ENCODE measurements at regions of chr12 and their contacts with region 1.

Region 1: DNA sequence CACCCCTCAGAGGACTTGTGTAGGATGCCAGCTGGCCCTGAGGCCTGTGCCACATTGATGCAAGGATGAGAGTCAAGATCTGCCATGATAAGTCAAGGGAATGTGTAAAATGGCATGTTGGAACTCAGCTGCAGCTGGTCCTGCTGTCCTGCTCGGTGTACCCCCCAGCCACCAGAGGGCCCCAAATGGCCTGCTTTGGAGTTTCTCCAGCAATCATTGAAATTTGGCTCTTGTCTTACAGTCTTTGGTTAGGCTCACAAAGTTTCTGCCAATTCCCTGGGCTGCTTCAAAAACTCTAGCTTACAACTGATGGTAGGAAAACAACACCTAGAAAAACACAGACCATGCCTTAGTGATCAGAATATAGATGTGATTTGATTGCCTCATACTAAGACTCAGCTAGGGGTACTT is 76.8 kb downstream of the HSD17B6 start:
- DNase-seq: peak; percentile 53
- H3K4me3 ChIP-seq: no peak overlapping the region
- H3K27ac ChIP-seq: no peak overlapping the region
- H3K4me1 ChIP-seq: no peaks in the 10 kb centered on the region
- H3K27me3 ChIP-seq: no peaks in the 10 kb centered on the region
- CTCF ChIP-seq: peak; percentile 27

Region 2: DNA sequence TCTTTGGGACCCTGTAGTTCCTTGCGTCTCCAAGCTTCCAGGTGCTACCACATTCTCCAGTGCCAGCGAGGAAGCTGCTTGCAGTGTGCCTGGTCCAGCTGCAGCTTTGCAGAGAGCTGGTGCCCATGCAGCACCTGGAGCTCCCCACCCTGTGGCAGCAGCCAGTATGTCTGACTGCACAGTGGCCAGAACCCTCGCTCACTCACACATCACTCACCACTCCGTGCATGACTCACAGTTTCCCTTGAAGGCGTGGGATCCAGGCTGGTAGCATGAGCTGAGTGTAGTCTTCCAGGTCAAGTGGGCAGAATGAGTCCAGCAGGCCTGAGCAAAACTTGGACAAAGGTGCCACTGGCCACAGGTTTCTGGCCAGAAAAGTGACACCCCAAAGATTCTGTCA is 60.7 kb after region 1 on chr12:
- intact Hi-C with region 1: no loop called
- DNase-seq: no peak
- H3K4me3 ChIP-seq: no peak overlapping the region
- H3K27ac ChIP-seq: no peak overlapping the region
- H3K4me1 ChIP-seq: no peaks in the 10 kb centered on the region
- H3K27me3 ChIP-seq: no peaks in the 10 kb centered on the region
- CTCF ChIP-seq: no peak

Region 3: GRCh38 chr12:56987551-56988053 is 147.7 kb after region 1 on chr12:
- intact Hi-C with region 1: loop called (anchors 2 kb)
- DNase-seq: peak; percentile 82
- H3K4me3 ChIP-seq: no peak overlapping the region
- H3K27ac ChIP-seq: no peak overlapping the region
- H3K4me1 ChIP-seq: no peaks in the 10 kb centered on the region
- H3K27me3 ChIP-seq: no peaks in the 10 kb centered on the region
- CTCF ChIP-seq: peak; percentile 90

Region 4: DNA sequence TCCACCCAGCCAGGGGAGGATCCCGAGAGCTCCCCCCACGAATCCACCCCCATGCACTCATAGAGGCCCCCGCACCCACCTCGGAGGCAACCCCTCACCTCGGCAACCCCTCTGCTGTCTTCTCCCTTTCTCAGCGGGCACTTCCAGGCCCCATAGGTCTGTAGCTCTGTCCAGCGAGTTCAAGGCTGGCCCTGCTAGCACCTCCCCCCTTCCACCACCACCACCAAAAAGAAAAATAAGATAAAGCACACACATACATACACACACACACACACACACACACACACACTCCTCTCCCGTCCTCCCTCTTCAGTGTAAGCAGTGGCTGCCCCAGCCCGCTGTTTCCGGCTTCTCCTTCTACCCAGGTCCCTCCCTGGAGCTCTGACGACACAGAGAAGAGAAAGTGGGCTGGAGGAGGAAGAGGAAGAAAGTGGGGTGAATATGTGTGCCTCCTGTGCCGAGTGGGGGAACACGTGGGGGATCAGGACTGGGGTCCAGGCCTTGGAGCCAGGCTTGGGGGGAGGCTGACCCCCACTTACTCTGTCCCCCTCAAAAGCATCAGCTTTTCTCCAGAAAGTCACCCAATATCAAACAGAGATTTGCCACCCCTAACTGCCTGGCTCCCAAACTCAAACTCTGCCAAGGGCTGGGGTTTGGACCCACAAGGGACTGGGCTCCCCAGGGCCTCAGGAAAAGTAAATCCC is 271.3 kb after region 1 on chr12 and contains the start of gene STAT6:
- intact Hi-C with region 1: loop called (anchors 10 kb)
- DNase-seq: peak; percentile 91
- H3K4me3 ChIP-seq: peak within 1 kb of the TSS; percentile 65
- H3K27ac ChIP-seq: peak within 1 kb of the TSS; percentile 99
- H3K4me1 ChIP-seq: peaks cover 12% of the 10 kb centered on the region
- H3K27me3 ChIP-seq: no peaks in the 10 kb centered on the region
- CTCF ChIP-seq: no peak
- total RNA-seq, gene STAT6: 161 to 181 TPM

Measured in colonic mucosa (tissue), 4 donors.